ENCODE measurements at regions of chr13 and their contacts with region 1.

Region 1: DNA sequence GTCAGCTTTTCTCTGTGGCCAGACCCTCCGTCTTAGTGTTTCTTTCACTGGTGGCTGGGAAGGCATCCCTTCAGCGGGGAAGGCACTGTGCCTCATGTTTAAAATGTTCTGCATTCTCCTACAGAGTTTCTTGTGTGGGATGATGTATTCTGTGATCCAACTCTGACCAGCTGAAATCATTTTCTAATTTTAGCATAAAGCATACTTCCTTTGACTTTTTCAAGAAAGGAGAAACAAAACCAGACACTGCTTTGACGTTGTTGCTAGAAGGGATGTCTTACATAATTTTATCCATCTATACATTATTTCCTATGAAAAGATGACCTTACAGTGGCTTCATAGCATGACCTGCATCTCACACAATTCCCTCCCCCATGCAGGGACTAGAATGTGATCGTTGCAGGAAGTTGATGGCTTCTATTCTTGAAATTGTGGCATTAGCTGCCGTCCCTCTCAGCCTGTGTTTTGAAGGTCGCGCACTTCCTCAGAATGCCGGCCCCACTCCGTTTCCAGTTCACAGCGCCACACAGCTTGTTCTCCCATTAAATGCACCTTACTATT is 38.6 kb upstream of the TEX29 start:
- DNase-seq: peak in 2 of 5 donors; percentile 46 to 54
- ATAC-seq: peak; percentile 25 to 58 (median 41)
- H3K4me3 ChIP-seq: peak overlapping the region in 1 of 12 donors; percentile 9
- H3K27ac ChIP-seq: peak overlapping the region; percentile 43 to 83 (median 72)
- H3K4me1 ChIP-seq: peaks cover 11 to 57% (median 40%) of the 10 kb centered on the region in 12 donors
- H3K27me3 ChIP-seq: no peaks in the 10 kb centered on the region
- CTCF ChIP-seq: peak in 2 of 12 donors; percentile 22 to 26
- POLR2A ChIP-seq: no peak

Region 2: GRCh38 chr13:111233080-111233479 is 48.8 kb before region 1 on chr13:
- intact Hi-C with region 1: no loop called
- DNase-seq: no peak
- ATAC-seq: no peak
- H3K4me3 ChIP-seq: no peak overlapping the region
- H3K27ac ChIP-seq: no peak overlapping the region
- H3K4me1 ChIP-seq: peaks cover 0 to 48% (median 20%) of the 10 kb centered on the region in 12 donors
- H3K27me3 ChIP-seq: no peaks in the 10 kb centered on the region
- CTCF ChIP-seq: no peak
- POLR2A ChIP-seq: no peak

Region 3: GRCh38 chr13:111247562-111247961 is 34.3 kb before region 1 on chr13:
- intact Hi-C with region 1: loop called in 1 of 10 experiments (anchors 5 kb)
- DNase-seq: no peak
- ATAC-seq: peak; percentile 75 to 83 (median 82)
- H3K4me3 ChIP-seq: no peak overlapping the region
- H3K27ac ChIP-seq: peak overlapping the region in 8 of 12 donors; percentile 5 to 66 (median 36)
- H3K4me1 ChIP-seq: peaks cover 0 to 53% (median 26%) of the 10 kb centered on the region in 12 donors
- H3K27me3 ChIP-seq: no peaks in the 10 kb centered on the region
- CTCF ChIP-seq: no peak
- POLR2A ChIP-seq: no peak

Region 4: GRCh38 chr13:111262715-111263114 is 19.1 kb before region 1 on chr13:
- intact Hi-C with region 1: loop called in 1 of 10 experiments (anchors 1 kb)
- DNase-seq: no peak
- ATAC-seq: peak in 2 of 4 donors; percentile 28 to 48
- H3K4me3 ChIP-seq: no peak overlapping the region
- H3K27ac ChIP-seq: no peak overlapping the region
- H3K4me1 ChIP-seq: peaks cover 0 to 21% (median 4%) of the 10 kb centered on the region in 12 donors
- H3K27me3 ChIP-seq: no peaks in the 10 kb centered on the region
- CTCF ChIP-seq: no peak
- POLR2A ChIP-seq: no peak